AG04450 (cell line): ENCODE measurements at regions of chr17 and their contacts with region 1.

Region 1: DNA sequence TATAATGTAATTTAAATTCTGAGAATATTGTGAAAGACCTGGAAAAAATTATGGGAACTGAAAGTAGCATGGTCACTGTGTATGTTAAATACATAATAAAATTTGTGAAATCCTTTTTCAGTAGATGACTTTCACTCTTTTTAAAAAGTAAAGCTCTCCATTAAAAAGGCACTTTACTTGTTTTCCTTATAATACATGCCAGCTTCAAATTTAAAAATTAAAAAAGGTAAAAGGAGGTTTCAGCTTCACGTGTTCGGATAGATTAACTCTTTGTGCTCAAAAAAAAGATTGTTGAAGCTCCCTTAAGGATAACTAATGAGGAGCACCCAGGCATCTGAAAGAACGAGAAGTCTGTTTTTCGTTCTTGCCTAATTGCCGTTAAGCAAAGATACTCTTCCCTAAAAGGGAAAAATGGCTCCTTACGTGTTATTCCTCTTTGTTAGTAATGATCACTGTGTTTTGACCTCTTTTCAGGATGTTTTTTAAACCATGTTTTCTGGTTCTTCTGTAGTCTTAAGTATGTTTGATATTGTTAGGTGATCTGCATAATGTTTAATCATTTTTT is 87.8 kb downstream of the TUBD1 start:
- DNase-seq: no peak
- H3K4me3 ChIP-seq: no peak overlapping the region
- H3K27ac ChIP-seq: no peak overlapping the region
- H3K27me3 ChIP-seq: no peaks in the 10 kb centered on the region
- CTCF ChIP-seq: no peak

Region 2: DNA sequence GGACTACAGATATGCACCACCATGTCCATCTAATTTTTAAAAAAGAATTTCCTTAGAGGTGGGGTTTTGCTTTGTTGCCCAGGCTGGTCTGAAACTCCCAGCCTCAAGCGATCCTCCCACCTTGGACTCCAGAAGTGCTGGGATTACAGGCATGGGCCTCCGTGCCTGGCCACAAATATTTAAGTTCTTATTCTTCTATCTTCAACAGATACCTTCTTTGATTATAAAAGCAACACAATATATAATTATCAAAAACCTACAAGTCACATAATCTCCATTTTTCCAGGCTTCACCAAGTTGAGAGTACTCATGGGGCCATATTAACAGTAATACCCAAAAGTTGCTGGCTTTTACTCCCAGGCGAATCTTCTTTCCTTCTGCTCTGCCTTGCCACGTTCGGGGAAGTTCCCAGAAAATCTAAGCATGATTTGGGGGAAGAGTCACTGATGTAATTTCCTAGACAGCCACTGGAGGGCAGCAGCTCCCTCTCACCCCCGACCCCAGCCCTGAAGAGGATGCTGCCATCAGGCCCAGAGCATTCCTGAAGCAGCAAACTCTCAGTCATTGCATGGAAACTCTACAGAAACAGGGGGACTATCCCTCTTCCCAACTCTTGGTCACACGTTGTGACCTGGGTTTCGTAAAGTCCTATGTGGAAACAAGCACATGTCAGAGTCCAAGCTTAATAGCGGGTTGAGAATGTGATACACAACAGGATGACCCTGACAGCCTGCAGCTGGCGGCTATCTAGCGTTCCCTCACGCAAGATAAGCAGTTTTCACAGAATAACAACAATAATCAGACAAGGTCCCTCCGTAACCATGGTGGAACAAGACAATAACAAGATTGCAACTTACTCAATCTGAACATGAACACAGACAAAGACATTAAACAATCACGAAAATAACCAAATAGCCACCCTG is 283.5 kb before region 1 on chr17:
- CTCF ChIA-PET with region 1: no interaction called
- POLR2A ChIA-PET with region 1: no interaction called
- DNase-seq: peak; percentile 21
- H3K4me3 ChIP-seq: no peak overlapping the region
- H3K27ac ChIP-seq: no peak overlapping the region
- H3K27me3 ChIP-seq: peaks cover 4% of the 10 kb centered on the region
- CTCF ChIP-seq: peak; percentile 85

Region 3: GRCh38 chr17:59769891-59770290 is 35.1 kb before region 1 on chr17:
- CTCF ChIA-PET with region 1: interaction called, 10 read pairs
- POLR2A ChIA-PET with region 1: no interaction called
- DNase-seq: no peak
- H3K4me3 ChIP-seq: no peak overlapping the region
- H3K27ac ChIP-seq: no peak overlapping the region
- H3K27me3 ChIP-seq: no peaks in the 10 kb centered on the region
- CTCF ChIP-seq: no peak

Region 4: DNA sequence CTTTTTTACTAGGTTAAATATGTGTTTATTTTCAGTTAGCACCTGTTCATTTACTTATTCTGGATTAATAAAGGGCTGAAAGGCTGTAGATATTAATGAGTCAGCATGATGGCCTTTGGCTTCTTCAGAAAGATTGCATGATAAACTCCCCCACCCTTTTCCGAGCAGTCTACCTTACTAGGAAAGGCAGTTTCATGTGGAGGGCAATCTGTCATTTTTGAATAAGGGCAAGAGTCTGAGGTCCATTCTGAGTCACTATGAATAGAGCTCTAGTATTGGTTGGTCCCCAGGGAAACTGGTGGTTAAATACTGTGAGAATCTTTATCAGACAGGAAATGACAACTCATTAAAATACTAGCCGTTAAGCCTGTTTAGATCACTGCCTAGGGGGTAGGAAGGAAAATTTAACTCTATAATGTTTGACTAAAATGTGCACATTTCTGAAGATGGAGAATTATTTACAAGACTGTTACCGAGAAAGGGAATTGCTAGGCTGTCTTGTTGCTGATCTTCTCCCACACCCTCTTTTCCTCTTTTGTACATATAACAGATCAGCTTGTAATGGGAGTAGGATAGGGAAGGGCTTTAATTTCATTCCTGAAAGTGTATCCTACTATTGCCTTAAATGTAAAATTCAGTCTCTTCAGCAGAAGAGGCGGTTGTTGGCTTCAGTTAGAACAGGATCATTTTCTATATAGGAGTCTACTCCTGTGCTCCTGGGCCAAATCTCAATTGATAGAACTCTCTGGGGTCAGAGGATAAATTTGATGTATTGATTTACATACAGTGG is 24.4 kb after region 1 on chr17:
- CTCF ChIA-PET with region 1: interaction called, 15 read pairs
- POLR2A ChIA-PET with region 1: no interaction called
- DNase-seq: peak; percentile 77
- H3K4me3 ChIP-seq: peak overlapping the region; percentile 14
- H3K27ac ChIP-seq: peak overlapping the region; percentile 85
- H3K27me3 ChIP-seq: no peaks in the 10 kb centered on the region
- CTCF ChIP-seq: no peak